Activated CD4-positive, alpha-beta T cell treated with anti-CD3 and anti-CD28 coated beads, Interleukin-2, amount 10 ng/mL, durations not matched to agents 7 days and 5 days (primary cell): ENCODE measurements at regions of chr4 and their contacts with region 1.

Region 1: DNA sequence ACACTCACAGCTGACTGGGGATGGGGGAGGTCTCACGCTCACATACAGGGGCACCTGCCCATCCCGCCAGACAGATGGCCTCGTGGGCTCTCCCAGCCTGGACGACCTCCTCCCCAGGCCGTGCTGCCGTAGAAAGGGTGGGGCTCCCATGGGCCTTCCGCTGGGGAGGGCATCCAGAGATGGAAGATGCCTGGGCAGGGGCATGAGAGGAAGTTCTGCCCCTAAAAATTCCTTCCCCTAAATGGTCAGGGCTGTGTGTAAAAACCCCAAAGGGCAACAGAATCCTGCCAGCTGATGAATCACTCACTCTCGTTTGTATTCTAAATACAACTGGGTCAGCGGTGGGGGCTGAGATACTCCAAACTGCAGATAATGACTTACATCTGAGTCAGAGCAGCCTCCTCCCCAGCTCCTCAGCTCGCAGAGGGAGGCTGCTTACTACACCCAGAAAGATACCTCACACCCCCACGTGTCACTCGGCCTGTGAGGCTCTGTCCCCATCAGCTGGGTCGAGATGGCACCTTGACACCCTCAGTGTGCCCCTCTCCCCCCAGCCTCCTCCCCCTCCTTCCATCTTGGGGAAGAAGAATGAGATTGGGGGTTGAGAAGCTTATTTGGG is 10.1 kb downstream of the WDR1 start:
- DNase-seq: peak; percentile 49
- H3K4me3 Mint-ChIP-seq: no peak overlapping the region
- H3K27ac Mint-ChIP-seq: peak overlapping the region; percentile 47
- H3K4me1 Mint-ChIP-seq: peaks cover 98% of the 10 kb centered on the region
- H3K27me3 Mint-ChIP-seq: no peaks in the 10 kb centered on the region

Region 2: GRCh38 chr4:10089346-10089745 is 17.2 kb before region 1 on chr4:
- CTCF ChIA-PET with region 1: interaction called, 13 read pairs
- POLR2A ChIA-PET with region 1: no interaction called
- DNase-seq: no peak
- H3K4me3 Mint-ChIP-seq: no peak overlapping the region
- H3K27ac Mint-ChIP-seq: no peak overlapping the region
- H3K4me1 Mint-ChIP-seq: peaks cover 34% of the 10 kb centered on the region
- H3K27me3 Mint-ChIP-seq: no peaks in the 10 kb centered on the region